ENCODE measurements at regions of chr1 and their contacts with region 1.

Region 1: DNA sequence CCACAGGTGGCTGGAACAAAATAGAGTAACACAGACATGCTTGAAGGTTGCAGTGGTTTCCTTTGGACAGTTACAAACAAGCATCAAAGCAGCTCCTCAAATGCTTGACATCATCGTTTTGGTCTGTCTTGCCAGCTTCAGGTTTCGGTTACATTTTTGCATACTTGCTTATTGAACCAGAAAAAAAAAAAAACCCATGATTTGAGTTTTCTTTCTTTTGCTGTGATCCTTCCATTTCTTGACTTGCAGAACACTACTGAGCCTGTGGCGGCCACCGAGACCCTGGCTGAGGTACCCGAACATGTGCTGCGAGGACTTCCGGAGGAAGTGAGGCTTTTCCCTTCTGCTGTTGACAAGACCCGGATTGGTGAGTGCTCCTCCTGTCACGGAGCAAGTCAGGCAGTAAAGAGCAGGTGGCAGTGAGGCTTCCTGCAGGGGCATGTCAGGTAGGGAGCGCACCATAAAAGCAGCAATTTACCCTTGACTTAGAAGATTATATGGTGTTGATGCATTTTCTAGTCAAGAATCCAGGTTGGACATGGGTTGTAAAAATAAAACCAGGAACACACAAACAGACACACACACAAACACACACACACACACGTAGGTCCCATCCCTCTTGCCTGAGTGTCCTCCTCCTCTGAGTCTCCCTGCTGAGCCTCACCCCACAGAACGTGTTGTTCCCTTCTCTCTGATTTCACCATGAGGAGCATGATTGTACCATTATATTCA is 30.9 kb downstream of the PRDM2 start:
- DNase-seq: peak; percentile 56 to 96 (median 92)
- ATAC-seq: peak; percentile 94
- H3K4me3 ChIP-seq: peak overlapping the region; percentile 41
- H3K4me3 Mint-ChIP-seq: peak overlapping the region; percentile 70 to 91 (median 86)
- H3K27ac ChIP-seq: peak overlapping the region; percentile 81
- H3K27ac Mint-ChIP-seq: peak overlapping the region; percentile 96 to 100 (median 98)
- H3K4me1 ChIP-seq: peaks cover 50 to 58% of the 10 kb centered on the region in 2 donors
- H3K4me1 Mint-ChIP-seq: peaks cover 50 to 99% (median 87%) of the 10 kb centered on the region in 7 donors
- H3K27me3 ChIP-seq: no peaks in the 10 kb centered on the region
- H3K27me3 Mint-ChIP-seq: no peaks in the 10 kb centered on the region

Region 2: DNA sequence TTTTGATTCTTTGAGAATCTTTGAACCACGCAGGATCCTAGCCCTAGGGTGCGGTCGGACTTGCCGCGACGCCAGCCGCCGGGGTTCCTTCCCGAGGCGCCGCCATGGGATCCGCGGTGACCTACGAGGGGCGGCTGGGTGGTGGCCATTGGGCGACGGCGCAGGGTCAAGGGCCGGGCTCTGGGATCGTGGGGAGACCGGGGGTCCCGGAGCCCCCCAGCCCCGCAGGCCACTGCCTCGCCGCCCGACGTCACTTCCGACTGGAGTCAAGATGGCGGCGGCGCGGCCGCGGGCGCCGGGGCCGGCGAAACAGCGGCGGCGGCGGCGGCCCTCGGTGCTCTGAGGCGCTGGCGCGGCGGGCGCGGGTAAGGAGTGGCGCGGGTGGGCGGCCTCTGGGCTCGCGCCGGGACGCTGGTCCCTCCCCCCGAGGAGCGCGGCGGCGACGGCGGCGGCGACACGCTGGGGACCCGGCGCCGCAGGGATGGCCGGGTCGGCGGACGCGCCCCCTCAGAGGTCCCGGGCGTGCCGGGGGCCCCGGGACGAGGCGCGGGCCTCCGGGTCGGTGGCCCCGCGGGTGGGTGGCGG is 30.9 kb before region 1 on chr1 and contains the start of gene PRDM2:
- CTCF ChIA-PET with region 1: interaction called, 15 read pairs
- POLR2A ChIA-PET with region 1: interaction called, 16 read pairs
- intact Hi-C with region 1: loop called (anchors 1 kb)
- DNase-seq: peak; percentile 53 to 76 (median 69)
- ATAC-seq: peak; percentile 67
- H3K4me3 ChIP-seq: peak within 1 kb of the TSS; percentile 90
- H3K4me3 Mint-ChIP-seq: peak within 1 kb of the TSS; percentile 93 to 100 (median 98)
- H3K27ac ChIP-seq: peak within 1 kb of the TSS; percentile 96
- H3K27ac Mint-ChIP-seq: peak within 1 kb of the TSS; percentile 95 to 99 (median 98)
- H3K4me1 ChIP-seq: peaks cover 27% of the 10 kb centered on the region in 2 donors
- H3K4me1 Mint-ChIP-seq: peaks cover 31 to 66% (median 53%) of the 10 kb centered on the region in 7 donors
- H3K27me3 ChIP-seq: no peaks in the 10 kb centered on the region
- H3K27me3 Mint-ChIP-seq: peaks cover 0 to 9% (median 0%) of the 10 kb centered on the region in 5 donors
- total RNA-seq, gene PRDM2: 58.3 to 142 (median 127) TPM

Region 3: DNA sequence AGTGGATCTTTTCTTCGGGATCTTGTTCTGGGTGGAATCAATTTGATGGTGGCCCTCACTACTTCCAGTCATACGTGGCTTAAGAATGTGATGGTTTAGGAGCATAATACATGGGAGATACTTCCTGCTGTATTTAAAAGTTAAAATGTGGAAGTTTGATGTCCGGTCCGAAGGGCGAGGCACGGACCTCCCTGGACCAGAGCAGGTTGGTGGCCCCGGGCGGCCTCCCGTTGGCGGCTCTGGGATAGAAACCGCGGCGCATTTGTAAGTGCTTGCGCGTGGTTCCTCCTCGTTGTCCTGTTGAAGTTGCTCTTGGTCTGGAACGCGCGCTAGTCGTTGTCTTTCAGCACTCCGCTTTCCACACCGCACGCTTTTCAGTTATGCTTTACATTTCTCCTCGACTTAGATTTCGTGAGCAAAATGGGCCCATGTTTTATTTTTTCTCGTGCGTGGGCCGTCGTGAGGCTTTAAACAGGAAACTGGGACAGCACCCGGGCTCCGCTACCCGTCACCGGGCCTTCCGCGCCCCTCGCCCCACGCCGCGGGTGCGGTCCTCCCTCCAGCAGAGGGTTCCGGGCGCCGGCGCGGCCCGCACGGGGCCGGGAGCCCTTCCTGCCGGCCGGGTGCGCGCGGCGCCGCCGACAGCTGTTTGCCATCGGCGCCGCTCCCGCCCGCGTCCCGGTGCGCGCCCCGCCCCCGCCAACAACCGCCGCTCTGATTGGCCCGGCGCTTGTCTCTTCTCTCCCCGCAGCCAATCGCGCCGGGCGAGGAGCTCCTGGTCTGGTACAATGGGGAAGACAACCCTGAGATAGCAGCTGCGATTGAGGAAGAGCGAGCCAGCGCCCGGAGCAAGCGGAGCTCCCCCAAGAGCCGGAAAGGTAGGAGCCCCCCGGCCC is 17.9 kb after region 1 on chr1:
- CTCF ChIA-PET with region 1: interaction called, 6 read pairs
- POLR2A ChIA-PET with region 1: interaction called, 206 read pairs
- intact Hi-C with region 1: loop called (anchors 1 kb)
- DNase-seq: peak; percentile 94 to 97 (median 96)
- ATAC-seq: peak; percentile 95
- H3K4me3 ChIP-seq: peak overlapping the region; percentile 78
- H3K4me3 Mint-ChIP-seq: peak overlapping the region; percentile 90 to 98 (median 94)
- H3K27ac ChIP-seq: peak overlapping the region; percentile 83
- H3K27ac Mint-ChIP-seq: peak overlapping the region; percentile 91 to 97 (median 96)
- H3K4me1 ChIP-seq: peaks cover 36 to 43% of the 10 kb centered on the region in 2 donors
- H3K4me1 Mint-ChIP-seq: peaks cover 31 to 67% (median 54%) of the 10 kb centered on the region in 7 donors
- H3K27me3 ChIP-seq: no peaks in the 10 kb centered on the region
- H3K27me3 Mint-ChIP-seq: no peaks in the 10 kb centered on the region

Region 4: DNA sequence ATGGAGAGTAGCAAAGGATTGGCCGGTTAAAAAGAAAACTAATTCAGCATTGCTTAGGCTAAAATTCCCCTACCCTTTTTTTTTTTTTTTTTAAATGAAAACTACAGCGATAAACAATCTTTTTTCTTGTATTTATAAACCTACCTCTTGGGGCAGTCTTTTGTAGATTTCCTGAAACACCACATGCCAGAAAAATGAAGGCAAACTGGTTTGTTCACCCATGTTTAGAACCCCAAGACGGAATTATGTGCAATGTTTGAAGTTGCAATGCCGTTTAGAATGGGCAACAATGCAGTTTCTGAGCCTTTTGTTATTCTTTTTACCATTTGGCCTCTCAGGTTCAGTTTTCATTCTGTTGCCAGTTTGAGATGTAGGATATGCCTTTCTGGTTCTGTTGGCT is 28.2 kb after region 1 on chr1:
- CTCF ChIA-PET with region 1: interaction called, 8 read pairs
- POLR2A ChIA-PET with region 1: interaction called, 11 read pairs
- intact Hi-C with region 1: no loop called
- DNase-seq: peak in 2 of 9 donors; percentile 10 to 23
- ATAC-seq: peak; percentile 44
- H3K4me3 ChIP-seq: no peak overlapping the region
- H3K4me3 Mint-ChIP-seq: peak overlapping the region in 8 of 10 donors; percentile 9 to 57 (median 37)
- H3K27ac ChIP-seq: no peak overlapping the region
- H3K27ac Mint-ChIP-seq: peak overlapping the region in 5 of 9 donors; percentile 31 to 75 (median 71)
- H3K4me1 ChIP-seq: peaks cover 67 to 71% of the 10 kb centered on the region in 2 donors
- H3K4me1 Mint-ChIP-seq: peaks cover 54 to 97% (median 92%) of the 10 kb centered on the region in 7 donors
- H3K27me3 ChIP-seq: no peaks in the 10 kb centered on the region
- H3K27me3 Mint-ChIP-seq: no peaks in the 10 kb centered on the region

Region 5: DNA sequence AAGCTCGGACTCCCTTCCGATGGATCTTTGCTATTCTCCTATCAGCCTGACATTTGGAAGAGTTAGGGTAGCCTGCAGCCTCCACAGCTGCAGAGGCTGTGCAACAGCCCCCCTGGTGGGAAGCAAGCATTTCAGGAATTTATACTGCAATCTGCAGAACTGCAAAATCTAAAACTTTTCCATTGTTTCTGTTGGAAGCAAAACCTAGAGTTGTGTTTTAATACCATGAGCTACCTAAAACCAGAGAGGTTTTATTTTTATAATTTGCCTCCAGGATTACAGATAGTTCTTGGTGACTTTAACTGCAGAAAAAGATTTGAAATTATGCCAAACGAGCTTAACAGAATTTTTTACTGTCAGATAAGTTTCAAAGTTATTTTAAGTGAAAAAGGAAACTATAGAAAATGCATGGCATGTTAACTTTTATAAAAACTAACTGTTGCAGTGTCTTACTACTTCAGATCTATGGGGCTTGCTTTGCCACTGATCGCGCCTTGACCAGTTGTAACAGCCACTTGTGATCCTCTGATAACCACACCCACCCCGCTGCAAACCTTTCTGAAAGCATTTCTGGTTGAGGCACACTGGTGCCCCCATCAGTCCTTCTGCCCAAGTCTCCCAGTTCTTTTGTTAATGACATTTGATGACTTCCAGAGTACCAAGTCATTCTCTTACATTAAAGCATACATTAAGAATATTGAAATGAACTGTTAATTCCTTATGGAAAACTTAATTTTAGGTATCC is 33.8 kb after region 1 on chr1:
- CTCF ChIA-PET with region 1: no interaction called
- POLR2A ChIA-PET with region 1: interaction called, 7 read pairs
- intact Hi-C with region 1: loop called in 1 of 2 experiments (anchors 5 kb)
- DNase-seq: peak in 1 of 9 donors; percentile 12
- ATAC-seq: peak; percentile 47
- H3K4me3 ChIP-seq: no peak overlapping the region
- H3K4me3 Mint-ChIP-seq: peak overlapping the region in 5 of 10 donors; percentile 2 to 41 (median 13)
- H3K27ac ChIP-seq: no peak overlapping the region
- H3K27ac Mint-ChIP-seq: peak overlapping the region in 6 of 9 donors; percentile 17 to 56 (median 40)
- H3K4me1 ChIP-seq: peaks cover 39 to 50% of the 10 kb centered on the region in 2 donors
- H3K4me1 Mint-ChIP-seq: peaks cover 50 to 89% (median 85%) of the 10 kb centered on the region in 7 donors
- H3K27me3 ChIP-seq: no peaks in the 10 kb centered on the region
- H3K27me3 Mint-ChIP-seq: no peaks in the 10 kb centered on the region

Region 6: DNA sequence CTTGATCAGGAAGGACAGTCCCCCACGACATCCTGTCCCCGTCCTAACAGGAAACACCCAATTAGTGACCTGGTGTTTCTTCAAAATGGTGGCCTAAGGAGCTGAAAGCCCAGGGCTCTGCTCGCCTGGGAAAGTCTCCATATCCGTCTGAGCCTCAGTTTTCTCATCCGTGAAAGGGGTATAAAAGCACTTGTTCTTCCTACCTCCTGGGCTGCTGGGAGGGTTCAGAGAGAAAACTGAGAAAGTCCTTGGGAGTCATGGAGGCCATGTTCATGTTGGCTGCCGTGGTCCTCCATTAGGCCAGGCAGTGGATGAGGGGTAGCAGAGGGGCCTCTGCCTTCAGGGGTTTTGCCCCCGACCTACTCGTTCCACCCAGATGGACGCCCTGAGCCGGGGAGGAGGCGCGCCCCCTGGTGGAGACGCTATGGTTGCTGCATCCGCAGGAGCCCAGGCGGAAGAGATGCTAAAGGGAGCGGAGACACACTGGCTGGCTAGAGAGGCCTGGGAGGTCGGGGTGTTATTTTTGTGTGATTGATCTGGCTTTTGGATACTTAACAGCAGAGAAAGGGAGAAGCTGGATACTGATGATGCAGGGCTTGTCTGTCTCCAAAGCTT is 82.6 kb after region 1 on chr1:
- CTCF ChIA-PET with region 1: interaction called, 4 read pairs
- POLR2A ChIA-PET with region 1: no interaction called
- intact Hi-C with region 1: loop called in 1 of 2 experiments (anchors 2 kb)
- DNase-seq: peak; percentile 19 to 67 (median 32)
- ATAC-seq: peak; percentile 59
- H3K4me3 ChIP-seq: no peak overlapping the region
- H3K4me3 Mint-ChIP-seq: no peak overlapping the region
- H3K27ac ChIP-seq: no peak overlapping the region
- H3K27ac Mint-ChIP-seq: peak overlapping the region in 2 of 9 donors; percentile 53 to 60
- H3K4me1 ChIP-seq: no peaks in the 10 kb centered on the region
- H3K4me1 Mint-ChIP-seq: peaks cover 10 to 28% (median 13%) of the 10 kb centered on the region in 7 donors
- H3K27me3 ChIP-seq: no peaks in the 10 kb centered on the region
- H3K27me3 Mint-ChIP-seq: no peaks in the 10 kb centered on the region

Measured in naive thymus-derived CD4-positive, alpha-beta T cell (primary cell).